Gastrocnemius medialis (tissue), 4 donors: ENCODE measurements at regions of chr2 and their contacts with region 1.

Region 1: DNA sequence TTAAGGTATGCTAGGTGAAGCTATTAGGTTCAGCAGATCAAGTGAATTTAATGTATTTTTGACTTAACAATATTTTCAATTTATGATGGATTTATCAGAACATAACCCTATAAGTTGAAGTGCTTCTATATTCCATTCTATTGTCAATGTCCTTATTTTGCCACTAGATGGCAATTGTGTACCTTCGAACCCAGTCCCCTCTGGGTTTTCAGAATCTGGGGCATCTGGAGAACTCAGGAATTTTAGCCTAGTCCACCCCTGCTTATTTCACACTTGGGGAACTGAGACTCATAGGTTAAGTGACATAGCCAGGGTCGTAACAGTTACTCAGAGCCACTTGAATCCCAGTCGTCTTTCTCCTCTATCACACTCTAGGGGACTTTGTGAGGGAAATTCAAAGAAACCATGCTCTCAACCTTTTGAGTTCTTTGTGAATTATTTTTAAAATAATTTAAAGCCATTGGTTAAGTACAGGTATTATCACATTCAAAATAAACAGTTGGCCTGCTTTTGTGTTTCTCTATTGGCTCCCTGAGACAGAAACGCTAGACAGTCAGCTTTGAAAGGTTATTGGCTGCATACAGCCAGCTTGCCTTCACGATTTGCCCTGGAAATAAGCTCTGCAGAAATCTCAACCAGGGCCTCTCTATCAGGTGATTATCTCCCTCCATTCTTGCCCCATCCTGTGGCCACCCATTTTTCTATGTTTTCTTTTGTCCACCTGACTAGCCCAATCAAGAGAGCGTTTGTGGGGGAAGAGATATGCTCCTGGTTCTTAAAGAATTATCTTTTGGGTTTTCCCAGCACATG is 145.0 kb downstream of the TTC27 start:
- DNase-seq: no peak
- ATAC-seq: peak in 1 of 2 donors; percentile 47
- H3K4me3 ChIP-seq: no peak overlapping the region
- H3K27ac ChIP-seq: no peak overlapping the region
- H3K4me1 ChIP-seq: no peaks in the 10 kb centered on the region
- H3K27me3 ChIP-seq: no peaks in the 10 kb centered on the region
- CTCF ChIP-seq: peak; percentile 48 to 65 (median 60)
- POLR2A ChIP-seq: no peak

Region 2: GRCh38 chr2:32946314-32947075 is 173.7 kb after region 1 on chr2 and contains the start of gene LTBP1:
- in situ Hi-C with region 1: loop called in 1 of 4 experiments (anchors 10 kb)
- intact Hi-C with region 1: loop called (anchors 1 kb)
- DNase-seq: peak; percentile 54 to 61
- ATAC-seq: peak; percentile 82 to 84
- H3K4me3 ChIP-seq: peak within 1 kb of the TSS; percentile 71 to 83 (median 74)
- H3K27ac ChIP-seq: peak within 1 kb of the TSS; percentile 75 to 79 (median 78)
- H3K4me1 ChIP-seq: no peaks in the 10 kb centered on the region
- H3K27me3 ChIP-seq: no peaks in the 10 kb centered on the region
- CTCF ChIP-seq: peak; percentile 48 to 85 (median 65)
- POLR2A ChIP-seq: peak; percentile 62 to 74
- total RNA-seq, gene LTBP1: 8.0 to 42.8 (median 18.4) TPM

Region 3: DNA sequence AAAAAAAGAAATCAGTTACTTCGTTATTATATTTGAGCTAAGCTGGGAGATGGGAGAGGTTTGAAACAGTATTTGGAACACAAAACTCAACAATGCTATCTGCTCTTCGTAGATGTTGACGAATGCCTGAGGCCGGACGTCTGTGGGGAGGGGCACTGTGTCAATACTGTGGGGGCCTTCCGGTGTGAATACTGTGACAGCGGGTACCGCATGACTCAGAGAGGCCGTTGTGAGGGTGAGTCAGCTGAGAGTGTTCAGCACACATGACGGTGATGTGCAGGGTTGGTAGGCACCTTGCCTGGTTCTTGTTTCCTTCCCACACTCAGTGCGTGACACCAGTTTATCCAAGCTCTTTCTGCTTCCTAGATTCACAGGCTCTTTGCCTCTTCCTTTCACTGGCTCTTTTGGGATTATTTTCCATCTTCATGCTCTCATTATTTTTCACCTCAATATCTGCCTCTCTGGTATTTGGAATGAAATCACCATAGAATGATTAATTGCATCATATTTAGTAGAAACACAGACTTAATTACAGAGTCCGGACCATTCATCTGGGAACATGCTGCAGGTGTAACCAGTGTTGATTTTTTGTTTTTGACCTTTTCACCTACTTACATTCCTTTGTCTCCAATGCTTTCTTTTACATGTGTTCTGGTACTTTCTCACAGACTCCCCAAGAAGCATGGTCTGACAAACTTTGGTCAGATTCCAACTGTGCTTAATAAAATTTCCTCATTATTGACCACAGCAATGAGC is 503.0 kb after region 1 on chr2:
- in situ Hi-C with region 1: no loop called
- intact Hi-C with region 1: loop called (anchors 5 kb)
- DNase-seq: peak; percentile 52 to 53
- ATAC-seq: peak; percentile 58 to 60
- H3K4me3 ChIP-seq: no peak overlapping the region
- H3K27ac ChIP-seq: peak overlapping the region; percentile 63 to 76 (median 70)
- H3K4me1 ChIP-seq: peaks cover 0 to 15% of the 10 kb centered on the region in 2 donors
- H3K27me3 ChIP-seq: no peaks in the 10 kb centered on the region
- CTCF ChIP-seq: no peak
- POLR2A ChIP-seq: peak; percentile 11 to 24

Region 4: DNA sequence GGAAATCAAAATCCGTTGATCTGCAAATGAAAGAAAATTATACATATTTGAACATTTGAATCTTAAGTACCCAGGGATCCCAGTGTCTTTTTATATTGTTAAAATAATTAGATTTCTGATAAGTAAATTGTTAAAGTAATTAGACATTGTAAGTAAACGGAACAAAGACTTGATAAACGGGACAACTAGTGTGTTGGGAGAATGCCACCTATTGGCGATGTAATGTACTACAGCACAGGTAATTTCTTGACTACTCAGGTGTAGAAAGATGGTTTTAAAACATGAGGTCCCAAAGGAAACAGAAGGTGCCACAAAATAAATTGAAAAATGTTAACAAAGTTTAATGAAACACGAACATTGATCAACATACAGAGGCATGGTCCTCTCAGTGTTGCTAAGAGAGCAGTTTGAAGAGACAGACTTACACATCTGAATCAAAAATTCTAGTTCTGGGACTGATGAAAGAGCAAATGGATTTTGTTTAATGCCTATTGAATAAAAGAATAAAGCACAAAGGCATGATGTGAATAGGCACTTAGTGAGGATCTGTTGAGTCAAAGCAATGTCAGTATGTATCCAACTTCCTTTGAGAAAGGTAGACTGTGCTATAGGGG is 600.2 kb after region 1 on chr2:
- in situ Hi-C with region 1: loop called in 1 of 4 experiments (anchors 10 kb)
- intact Hi-C with region 1: loop called (anchors 5 kb)
- DNase-seq: no peak
- ATAC-seq: no peak
- H3K4me3 ChIP-seq: no peak overlapping the region
- H3K27ac ChIP-seq: no peak overlapping the region
- H3K4me1 ChIP-seq: no peaks in the 10 kb centered on the region
- H3K27me3 ChIP-seq: no peaks in the 10 kb centered on the region
- CTCF ChIP-seq: peak; percentile 48 to 73 (median 61)
- POLR2A ChIP-seq: no peak

Region 5: GRCh38 chr2:33583194-33583938 is 810.5 kb after region 1 on chr2:
- in situ Hi-C with region 1: loop called in 2 of 4 experiments (anchors 25 kb)
- intact Hi-C with region 1: loop called (anchors 10 kb)
- DNase-seq: no peak
- ATAC-seq: no peak
- H3K4me3 ChIP-seq: no peak overlapping the region
- H3K27ac ChIP-seq: no peak overlapping the region
- H3K4me1 ChIP-seq: peaks cover 12 to 15% of the 10 kb centered on the region in 2 donors
- H3K27me3 ChIP-seq: no peaks in the 10 kb centered on the region
- CTCF ChIP-seq: peak; percentile 69 to 91 (median 83)
- POLR2A ChIP-seq: no peak